ENCODE measurements at regions of chr4 and their contacts with region 1.

Region 1: GRCh38 chr4:108166441-108167315 is 2.1 kb downstream of the LEF1 start:
- DNase-seq: peak; percentile 56 to 71 (median 57)
- H3K4me3 ChIP-seq: peak overlapping the region; percentile 81 to 91
- H3K4me3 Mint-ChIP-seq: peak overlapping the region; percentile 98 to 100 (median 98)
- H3K27ac ChIP-seq: peak overlapping the region; percentile 64
- H3K27ac Mint-ChIP-seq: peak overlapping the region; percentile 85 to 96 (median 94)
- H3K4me1 ChIP-seq: peaks cover 46% of the 10 kb centered on the region
- H3K4me1 Mint-ChIP-seq: peaks cover 23 to 78% (median 38%) of the 10 kb centered on the region in 4 donors
- H3K27me3 ChIP-seq: peaks cover 11% of the 10 kb centered on the region
- H3K27me3 Mint-ChIP-seq: peaks cover 15 to 28% of the 10 kb centered on the region in 2 donors

Region 2: GRCh38 chr4:106486533-106486932 is 1680.1 kb before region 1 on chr4:
- CTCF ChIA-PET with region 1: no interaction called
- POLR2A ChIA-PET with region 1: no interaction called
- intact Hi-C with region 1: no loop called
- DNase-seq: no peak
- H3K4me3 ChIP-seq: no peak overlapping the region
- H3K4me3 Mint-ChIP-seq: no peak overlapping the region
- H3K27ac ChIP-seq: no peak overlapping the region
- H3K27ac Mint-ChIP-seq: no peak overlapping the region
- H3K4me1 ChIP-seq: no peaks in the 10 kb centered on the region
- H3K4me1 Mint-ChIP-seq: no peaks in the 10 kb centered on the region
- H3K27me3 ChIP-seq: no peaks in the 10 kb centered on the region
- H3K27me3 Mint-ChIP-seq: peaks cover 0 to 1% of the 10 kb centered on the region in 2 donors

Region 3: DNA sequence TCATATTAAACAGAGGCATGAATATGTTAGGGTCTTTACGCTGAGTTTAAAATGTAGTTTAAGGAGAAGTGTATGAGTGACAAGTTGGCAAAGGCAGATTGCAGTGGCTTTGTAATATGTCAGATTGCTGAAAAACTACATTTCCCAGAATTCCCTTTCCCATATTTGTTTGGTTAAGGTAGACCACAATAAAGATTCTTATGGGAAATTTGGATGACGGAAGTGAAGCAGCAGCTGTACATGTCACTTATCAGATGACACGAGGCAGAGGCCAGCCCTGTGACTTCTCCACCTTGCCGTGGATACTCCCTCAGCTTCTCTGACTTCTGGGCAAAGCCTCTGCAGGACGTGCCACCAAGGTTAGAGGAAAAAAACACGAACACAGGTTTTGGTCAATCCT is 900.8 kb before region 1 on chr4:
- CTCF ChIA-PET with region 1: no interaction called
- POLR2A ChIA-PET with region 1: no interaction called
- intact Hi-C with region 1: no loop called
- DNase-seq: no peak
- H3K4me3 ChIP-seq: no peak overlapping the region
- H3K4me3 Mint-ChIP-seq: no peak overlapping the region
- H3K27ac ChIP-seq: no peak overlapping the region
- H3K27ac Mint-ChIP-seq: no peak overlapping the region
- H3K4me1 ChIP-seq: no peaks in the 10 kb centered on the region
- H3K4me1 Mint-ChIP-seq: no peaks in the 10 kb centered on the region
- H3K27me3 ChIP-seq: no peaks in the 10 kb centered on the region
- H3K27me3 Mint-ChIP-seq: no peaks in the 10 kb centered on the region

Region 4: GRCh38 chr4:108072300-108072699 is 94.4 kb before region 1 on chr4:
- CTCF ChIA-PET with region 1: interaction called, 3 read pairs
- POLR2A ChIA-PET with region 1: interaction called, 14 read pairs
- intact Hi-C with region 1: loop called (anchors 2 kb)
- DNase-seq: peak; percentile 58 to 87 (median 69)
- H3K4me3 ChIP-seq: no peak overlapping the region
- H3K4me3 Mint-ChIP-seq: peak overlapping the region in 7 of 8 donors; percentile 57 to 83 (median 78)
- H3K27ac ChIP-seq: peak overlapping the region; percentile 53
- H3K27ac Mint-ChIP-seq: peak overlapping the region; percentile 79 to 95 (median 94)
- H3K4me1 ChIP-seq: peaks cover 58% of the 10 kb centered on the region
- H3K4me1 Mint-ChIP-seq: peaks cover 36 to 74% (median 59%) of the 10 kb centered on the region in 4 donors
- H3K27me3 ChIP-seq: no peaks in the 10 kb centered on the region
- H3K27me3 Mint-ChIP-seq: no peaks in the 10 kb centered on the region

Region 5: GRCh38 chr4:108148316-108148715 is 18.4 kb before region 1 on chr4:
- CTCF ChIA-PET with region 1: interaction called, 3 read pairs
- POLR2A ChIA-PET with region 1: interaction called, 11 read pairs
- intact Hi-C with region 1: loop called (anchors 2 kb)
- DNase-seq: peak in 2 of 5 donors; percentile 28 to 72
- H3K4me3 ChIP-seq: no peak overlapping the region
- H3K4me3 Mint-ChIP-seq: peak overlapping the region in 7 of 8 donors; percentile 22 to 75 (median 49)
- H3K27ac ChIP-seq: peak overlapping the region; percentile 12
- H3K27ac Mint-ChIP-seq: peak overlapping the region; percentile 8 to 86 (median 40)
- H3K4me1 ChIP-seq: peaks cover 96% of the 10 kb centered on the region
- H3K4me1 Mint-ChIP-seq: peaks cover 77 to 93% (median 84%) of the 10 kb centered on the region in 4 donors
- H3K27me3 ChIP-seq: no peaks in the 10 kb centered on the region
- H3K27me3 Mint-ChIP-seq: peaks cover 0 to 1% of the 10 kb centered on the region in 2 donors

Region 6: GRCh38 chr4:108155373-108155772 is 11.3 kb before region 1 on chr4:
- CTCF ChIA-PET with region 1: interaction called, 6 read pairs
- POLR2A ChIA-PET with region 1: interaction called, 122 read pairs
- intact Hi-C with region 1: loop called (anchors 1 kb)
- DNase-seq: peak in 1 of 5 donors; percentile 56
- H3K4me3 ChIP-seq: no peak overlapping the region
- H3K4me3 Mint-ChIP-seq: peak overlapping the region; percentile 26 to 84 (median 72)
- H3K27ac ChIP-seq: no peak overlapping the region
- H3K27ac Mint-ChIP-seq: peak overlapping the region; percentile 33 to 89 (median 52)
- H3K4me1 ChIP-seq: peaks cover 100% of the 10 kb centered on the region
- H3K4me1 Mint-ChIP-seq: peaks cover 54 to 80% (median 69%) of the 10 kb centered on the region in 4 donors
- H3K27me3 ChIP-seq: no peaks in the 10 kb centered on the region
- H3K27me3 Mint-ChIP-seq: no peaks in the 10 kb centered on the region

Region 7: GRCh38 chr4:108276690-108277089 is 110.0 kb after region 1 on chr4:
- CTCF ChIA-PET with region 1: no interaction called
- POLR2A ChIA-PET with region 1: no interaction called
- intact Hi-C with region 1: no loop called
- DNase-seq: no peak
- H3K4me3 ChIP-seq: no peak overlapping the region
- H3K4me3 Mint-ChIP-seq: no peak overlapping the region
- H3K27ac ChIP-seq: no peak overlapping the region
- H3K27ac Mint-ChIP-seq: no peak overlapping the region
- H3K4me1 ChIP-seq: no peaks in the 10 kb centered on the region
- H3K4me1 Mint-ChIP-seq: no peaks in the 10 kb centered on the region
- H3K27me3 ChIP-seq: no peaks in the 10 kb centered on the region
- H3K27me3 Mint-ChIP-seq: no peaks in the 10 kb centered on the region